ENCODE measurements at regions of chr4 and their contacts with region 1.

Region 1: DNA sequence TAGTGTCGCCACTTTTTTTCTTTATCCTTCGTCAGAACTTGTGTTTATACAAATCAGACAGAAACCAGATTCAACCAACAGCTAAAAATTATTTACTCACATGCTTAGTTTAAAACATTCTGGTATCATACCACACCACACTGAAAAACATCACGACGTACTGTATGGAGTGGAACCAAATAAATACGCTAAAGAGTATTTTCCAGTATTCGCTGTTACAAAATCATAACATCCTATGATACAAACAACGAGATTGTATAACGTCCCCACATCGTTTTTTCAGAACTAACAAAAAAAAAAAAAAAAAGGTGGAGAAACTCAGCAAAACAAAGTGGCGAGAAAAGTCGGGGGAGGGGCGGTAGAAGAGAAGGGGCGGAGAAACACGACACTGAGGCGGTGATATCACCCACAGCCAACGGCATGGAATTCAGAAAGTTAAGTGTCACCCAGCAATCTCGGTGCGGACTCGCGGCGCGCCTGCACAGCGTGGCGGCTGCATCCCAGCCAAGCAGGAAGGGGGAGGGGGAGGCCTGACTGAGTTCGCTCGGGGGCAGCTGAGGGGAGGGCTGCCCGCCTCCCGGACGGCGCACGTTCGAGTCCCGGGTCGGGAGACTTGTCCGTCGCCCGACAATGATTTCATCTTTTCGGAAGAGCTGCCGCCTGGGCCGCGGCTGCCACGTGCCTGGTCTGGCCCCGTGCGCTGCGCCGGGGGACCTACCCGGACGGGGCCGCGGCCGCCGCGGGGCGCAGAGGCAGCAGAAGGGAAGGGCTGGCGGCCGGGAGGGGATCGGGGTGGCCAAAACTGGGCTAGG is 920 bp downstream of the SETD7 start:
- DNase-seq: peak; percentile 78
- H3K4me3 Mint-ChIP-seq: peak overlapping the region; percentile 93
- H3K27ac Mint-ChIP-seq: peak overlapping the region; percentile 96
- H3K4me1 Mint-ChIP-seq: peaks cover 47% of the 10 kb centered on the region
- H3K27me3 Mint-ChIP-seq: peaks cover 13% of the 10 kb centered on the region

Region 2: GRCh38 chr4:139858436-139859225 is 303.5 kb after region 1 on chr4:
- intact Hi-C with region 1: loop called (anchors 5 kb)
- DNase-seq: no peak
- H3K4me3 Mint-ChIP-seq: no peak overlapping the region
- H3K27ac Mint-ChIP-seq: no peak overlapping the region
- H3K4me1 Mint-ChIP-seq: peaks cover 33% of the 10 kb centered on the region
- H3K27me3 Mint-ChIP-seq: peaks cover 18% of the 10 kb centered on the region

Measured in activated T-helper 1 cell treated with anti-CD3 and anti-CD28 coated beads, Interleukin-12 subunit alpha, Interleukin-12 subunit beta, Interleukin-2, Interleukin-4 antibody, amounts not matched to agents 30 ng/mL and 10 ng/mL and 1 ng/mL, durations not matched to agents 14 hours and 24 hours and 36 hours (primary cell).